ENCODE measurements at regions of chr1 and their contacts with region 1.

Region 1: DNA sequence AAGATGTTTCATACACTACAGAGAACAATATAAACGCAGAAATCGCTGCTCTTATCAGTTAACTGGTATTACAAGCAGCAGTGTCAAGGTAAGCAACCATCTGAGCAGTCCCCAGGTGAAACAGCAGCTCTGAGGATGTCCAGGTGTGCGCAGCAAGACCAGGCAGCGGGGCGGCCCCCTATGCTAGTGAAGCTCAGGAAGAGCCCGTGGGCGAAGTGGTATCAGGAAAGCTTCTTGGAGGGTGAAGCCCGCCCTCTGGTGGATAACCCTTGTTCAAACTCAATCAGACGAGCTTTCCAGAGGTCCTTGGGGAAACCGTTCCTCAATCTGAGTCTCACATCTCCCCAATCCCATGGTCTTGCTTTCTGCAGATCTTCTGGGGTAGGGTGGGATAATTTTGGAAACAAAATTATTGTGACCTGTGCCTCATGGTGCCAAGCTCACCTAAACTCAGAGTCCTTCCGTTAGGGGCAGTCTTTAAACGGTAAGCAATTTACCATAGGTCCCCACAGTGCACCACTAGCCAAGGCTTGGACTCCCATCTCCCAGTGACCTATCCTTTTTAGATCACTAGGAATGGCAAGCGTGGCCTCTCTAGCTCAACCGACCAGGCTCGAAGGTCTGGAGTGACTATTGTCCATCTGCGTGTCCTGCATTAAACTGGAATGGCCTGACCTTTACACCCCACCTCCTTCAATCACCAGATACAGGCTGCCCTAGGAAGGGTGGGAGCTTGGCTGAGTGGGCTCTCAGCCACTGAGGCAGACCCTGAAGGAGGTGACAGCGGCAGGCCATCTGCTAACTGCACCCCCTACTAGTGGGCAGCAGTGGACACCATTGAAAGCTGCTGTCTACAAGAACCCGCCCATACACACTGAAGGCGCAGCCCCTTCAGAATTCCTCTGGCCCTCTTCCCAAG is 13.6 kb upstream of the FAM110D start:
- DNase-seq: peak; percentile 81
- H3K4me3 ChIP-seq: no peak overlapping the region
- H3K27ac ChIP-seq: no peak overlapping the region
- H3K4me1 ChIP-seq: no peaks in the 10 kb centered on the region
- H3K27me3 ChIP-seq: peaks cover 14% of the 10 kb centered on the region; the same call in 1 of the 2 replicates
- CTCF ChIP-seq: peak; percentile 73
- EP300 ChIP-seq: no peak
- RAD21 ChIP-seq: peak; percentile 92

Region 2: DNA sequence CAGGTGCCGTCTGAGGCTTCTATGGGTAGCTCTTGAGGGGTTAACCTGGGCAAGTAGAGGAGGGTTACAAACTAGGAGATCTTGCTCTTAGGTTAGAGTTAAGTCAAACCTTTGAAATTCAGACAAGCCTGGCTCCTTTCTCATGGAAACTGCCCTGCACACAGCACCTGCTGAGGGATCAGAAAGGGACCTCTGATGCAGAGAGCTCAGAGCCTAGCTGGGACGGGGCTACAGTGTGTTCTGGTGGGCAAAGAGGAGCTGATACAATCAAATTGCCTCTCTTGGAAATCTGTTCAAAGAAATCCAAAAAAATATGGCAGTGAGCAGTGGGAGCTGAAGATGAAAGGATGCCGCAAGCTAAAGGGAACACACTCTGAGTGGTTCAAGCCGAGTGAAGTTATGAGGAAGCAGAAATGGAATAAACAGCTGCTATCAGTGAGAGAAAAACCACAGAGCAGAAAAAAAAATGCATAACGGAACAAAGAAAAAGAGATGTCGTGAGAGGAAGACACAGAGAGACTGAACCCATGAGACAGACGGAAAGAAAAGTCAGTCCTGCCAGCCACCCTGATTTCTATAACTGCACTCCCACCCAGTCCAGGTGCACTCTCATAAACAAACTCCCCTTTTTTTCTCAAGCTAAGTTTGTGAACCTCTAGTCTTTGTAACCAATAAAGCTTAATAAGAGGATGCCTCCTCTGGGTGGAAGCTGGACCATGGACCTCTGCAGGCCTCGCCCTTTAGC is 174.1 kb before region 1 on chr1:
- CTCF ChIA-PET with region 1: no interaction called
- POLR2A ChIA-PET with region 1: no interaction called
- DNase-seq: no peak
- H3K4me3 ChIP-seq: no peak overlapping the region
- H3K27ac ChIP-seq: no peak overlapping the region
- H3K4me1 ChIP-seq: no peaks in the 10 kb centered on the region
- H3K27me3 ChIP-seq: no peaks in the 10 kb centered on the region
- CTCF ChIP-seq: no peak
- EP300 ChIP-seq: no peak
- RAD21 ChIP-seq: no peak

Region 3: DNA sequence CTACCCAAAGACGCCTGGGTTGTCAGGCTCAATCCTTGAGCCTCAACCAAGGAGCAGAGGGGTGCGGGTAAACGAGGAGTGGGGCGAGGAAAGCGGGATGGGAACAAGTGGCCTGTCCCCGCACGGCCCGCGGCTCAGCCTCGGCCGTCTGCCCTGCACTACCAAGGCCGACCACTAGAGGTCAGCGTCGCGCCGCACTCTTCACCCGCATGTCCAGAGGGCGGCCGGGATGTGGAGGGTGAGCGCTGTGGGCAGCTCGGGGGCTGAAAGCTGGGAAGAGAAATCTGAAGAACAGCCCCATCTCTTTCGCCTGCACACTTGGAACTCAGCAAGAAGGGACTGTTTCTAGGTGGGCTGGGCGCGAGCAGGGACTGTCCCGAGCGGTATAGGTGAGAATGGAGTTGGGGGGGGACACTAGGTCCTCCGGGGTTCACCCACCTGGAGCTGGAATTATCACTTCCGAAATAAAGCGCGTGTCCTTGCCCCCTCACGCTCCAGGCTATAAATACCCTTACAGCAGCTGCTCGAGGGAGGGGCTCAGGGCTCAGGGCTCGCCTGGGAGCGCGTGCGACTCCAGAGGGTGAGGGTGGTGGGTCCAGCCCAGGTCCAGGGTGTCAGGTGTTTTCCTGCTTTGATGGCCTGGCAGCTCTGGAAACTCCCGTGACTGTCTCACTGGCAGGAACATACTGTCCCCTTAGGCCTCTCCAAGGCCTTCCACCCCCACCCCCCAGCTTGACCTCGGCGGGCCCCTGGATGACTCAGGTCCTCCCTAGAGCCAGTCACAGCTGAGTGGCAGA is 109.1 kb before region 1 on chr1:
- CTCF ChIA-PET with region 1: interaction called, 58 read pairs
- POLR2A ChIA-PET with region 1: no interaction called
- DNase-seq: peak; percentile 95
- H3K4me3 ChIP-seq: peak overlapping the region; percentile 87 to 99
- H3K27ac ChIP-seq: peak overlapping the region in 1 of 2 experiments; percentile 69; a peak in 1 of 4 replicates
- H3K4me1 ChIP-seq: peaks cover 0 to 12% of the 10 kb centered on the region in 2 experiments; a peak in 1 of 4 replicates
- H3K27me3 ChIP-seq: peaks cover 5% of the 10 kb centered on the region; the same call in 1 of the 2 replicates
- CTCF ChIP-seq: peak; percentile 95
- EP300 ChIP-seq: no peak
- RAD21 ChIP-seq: peak; percentile 84

Region 4: DNA sequence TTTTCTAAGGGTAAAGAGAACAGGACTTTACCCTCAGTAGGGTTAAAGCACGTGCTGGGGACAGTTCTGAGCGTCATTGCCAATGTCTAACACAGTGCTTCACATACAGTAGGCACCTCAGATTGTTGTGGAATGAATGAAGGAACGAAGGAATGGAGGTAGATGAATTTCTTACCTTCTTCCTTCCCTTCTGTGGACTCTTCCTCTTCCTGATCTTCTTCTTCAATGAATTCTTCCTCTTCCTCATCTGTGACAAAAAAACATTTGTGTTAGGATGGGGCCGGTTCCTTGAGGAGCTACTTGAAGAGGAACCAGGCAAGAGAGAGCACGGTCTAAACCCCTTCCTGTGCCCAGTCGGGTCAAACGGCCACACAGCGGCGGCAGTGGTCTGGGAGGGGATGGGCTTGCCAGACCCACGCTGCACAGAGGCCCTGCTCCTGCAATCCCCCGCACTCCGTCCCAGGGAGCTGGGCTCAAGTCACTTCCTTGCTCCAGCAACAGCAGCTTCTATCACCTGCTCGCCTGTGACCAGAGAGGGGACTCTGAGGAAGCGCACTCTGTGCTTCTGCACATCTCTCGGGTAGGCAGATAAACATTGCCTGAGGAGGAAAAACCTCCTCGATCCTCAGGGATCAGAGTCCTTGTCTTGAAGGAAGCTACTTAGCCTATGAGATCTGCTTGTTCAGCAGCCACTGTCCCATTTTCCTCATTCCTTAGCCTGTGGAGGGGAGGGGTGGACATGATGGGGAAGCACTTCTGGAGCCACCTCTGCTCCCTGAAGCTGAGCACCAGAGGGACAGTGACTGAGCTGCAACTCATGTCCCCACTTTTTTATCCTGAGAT is 91.4 kb before region 1 on chr1:
- CTCF ChIA-PET with region 1: interaction called, 10 read pairs
- POLR2A ChIA-PET with region 1: no interaction called
- DNase-seq: no peak
- H3K4me3 ChIP-seq: no peak overlapping the region
- H3K27ac ChIP-seq: no peak overlapping the region
- H3K4me1 ChIP-seq: no peaks in the 10 kb centered on the region
- H3K27me3 ChIP-seq: peaks cover 57% of the 10 kb centered on the region; the same call in 1 of the 2 replicates
- CTCF ChIP-seq: no peak
- EP300 ChIP-seq: no peak
- RAD21 ChIP-seq: no peak

Region 5: GRCh38 chr1:26126321-26127084 is 18.8 kb before region 1 on chr1:
- CTCF ChIA-PET with region 1: interaction called, 91 read pairs
- POLR2A ChIA-PET with region 1: interaction called, 3 read pairs
- DNase-seq: no peak
- H3K4me3 ChIP-seq: no peak overlapping the region
- H3K27ac ChIP-seq: no peak overlapping the region
- H3K4me1 ChIP-seq: peaks cover 4 to 8% of the 10 kb centered on the region in 2 experiments; a peak in 3 of 4 replicates
- H3K27me3 ChIP-seq: no peaks in the 10 kb centered on the region
- CTCF ChIP-seq: no peak
- EP300 ChIP-seq: no peak
- RAD21 ChIP-seq: no peak

Region 6: GRCh38 chr1:26169669-26170471 is 24.6 kb after region 1 on chr1 and contains the start of gene ZNF593:
- CTCF ChIA-PET with region 1: interaction called, 131 read pairs
- POLR2A ChIA-PET with region 1: no interaction called
- DNase-seq: peak; percentile 99
- H3K4me3 ChIP-seq: peak within 1 kb of the TSS; percentile 85 to 98
- H3K27ac ChIP-seq: peak within 1 kb of the TSS; percentile 48 to 54; a peak in 3 of 4 replicates
- H3K4me1 ChIP-seq: peaks cover 0 to 18% of the 10 kb centered on the region in 2 experiments; a peak in 2 of 4 replicates
- H3K27me3 ChIP-seq: no peaks in the 10 kb centered on the region
- CTCF ChIP-seq: peak; percentile 78
- EP300 ChIP-seq: no peak
- RAD21 ChIP-seq: peak; percentile 47; the same call in 1 of the 2 replicates
- polyA plus RNA-seq, gene ZNF593: 58.7 and 64.8 TPM in 2 replicates

Region 7: GRCh38 chr1:26358411-26359384 is 213.4 kb after region 1 on chr1:
- CTCF ChIA-PET with region 1: no interaction called
- POLR2A ChIA-PET with region 1: no interaction called
- DNase-seq: no peak
- H3K4me3 ChIP-seq: no peak overlapping the region
- H3K27ac ChIP-seq: no peak overlapping the region
- H3K4me1 ChIP-seq: peaks cover 0 to 9% of the 10 kb centered on the region in 2 experiments; a peak in 2 of 4 replicates
- H3K27me3 ChIP-seq: peaks cover 25% of the 10 kb centered on the region; the same call in 1 of the 2 replicates
- CTCF ChIP-seq: no peak
- EP300 ChIP-seq: no peak
- RAD21 ChIP-seq: no peak